Activated CD8-positive, alpha-beta T cell treated with anti-CD3 and anti-CD28 coated beads, Interleukin-2, amount 10 ng/mL, durations not matched to agents 7 days and 5 days (primary cell): ENCODE measurements at regions of chr1 and their contacts with region 1.

Region 1: GRCh38 chr1:179121159-179121938 is 39.5 kb downstream of the TOR3A start:
- DNase-seq: peak; percentile 59
- ATAC-seq: peak; percentile 47
- H3K4me3 Mint-ChIP-seq: no peak overlapping the region
- H3K27ac Mint-ChIP-seq: no peak overlapping the region
- H3K4me1 Mint-ChIP-seq: peaks cover 2% of the 10 kb centered on the region
- H3K27me3 Mint-ChIP-seq: no peaks in the 10 kb centered on the region

Region 2: GRCh38 chr1:179025125-179025974 is 96.0 kb before region 1 on chr1 and contains the start of gene FAM20B:
- CTCF ChIA-PET with region 1: no interaction called
- POLR2A ChIA-PET with region 1: no interaction called
- DNase-seq: peak; percentile 93
- ATAC-seq: peak; percentile 90
- H3K4me3 Mint-ChIP-seq: peak within 1 kb of the TSS; percentile 82
- H3K27ac Mint-ChIP-seq: peak within 1 kb of the TSS; percentile 82
- H3K4me1 Mint-ChIP-seq: peaks cover 31% of the 10 kb centered on the region
- H3K27me3 Mint-ChIP-seq: peaks cover 12% of the 10 kb centered on the region
- total RNA-seq, gene FAM20B: 28.6 to 29.4 TPM

Region 3: GRCh38 chr1:179081687-179082332 is 39.5 kb before region 1 on chr1 and contains the start of gene TOR3A:
- CTCF ChIA-PET with region 1: interaction called, 12 read pairs
- POLR2A ChIA-PET with region 1: interaction called, 3 read pairs
- DNase-seq: peak; percentile 88
- ATAC-seq: peak; percentile 83
- H3K4me3 Mint-ChIP-seq: peak within 1 kb of the TSS; percentile 93
- H3K27ac Mint-ChIP-seq: peak within 1 kb of the TSS; percentile 93
- H3K4me1 Mint-ChIP-seq: peaks cover 30% of the 10 kb centered on the region
- H3K27me3 Mint-ChIP-seq: no peaks in the 10 kb centered on the region
- total RNA-seq, gene TOR3A: 49.3 to 50.4 TPM

Region 4: GRCh38 chr1:179107706-179108629 is 13.4 kb before region 1 on chr1:
- CTCF ChIA-PET with region 1: interaction called, 10 read pairs
- POLR2A ChIA-PET with region 1: interaction called, 3 read pairs
- DNase-seq: no peak
- ATAC-seq: no peak
- H3K4me3 Mint-ChIP-seq: no peak overlapping the region
- H3K27ac Mint-ChIP-seq: no peak overlapping the region
- H3K4me1 Mint-ChIP-seq: no peaks in the 10 kb centered on the region
- H3K27me3 Mint-ChIP-seq: no peaks in the 10 kb centered on the region

Region 5: GRCh38 chr1:179153217-179153616 is 31.9 kb after region 1 on chr1:
- CTCF ChIA-PET with region 1: interaction called, 10 read pairs
- POLR2A ChIA-PET with region 1: no interaction called
- DNase-seq: no peak
- ATAC-seq: no peak
- H3K4me3 Mint-ChIP-seq: no peak overlapping the region
- H3K27ac Mint-ChIP-seq: no peak overlapping the region
- H3K4me1 Mint-ChIP-seq: peaks cover 9% of the 10 kb centered on the region
- H3K27me3 Mint-ChIP-seq: no peaks in the 10 kb centered on the region

Region 6: GRCh38 chr1:179293340-179294327 is 172.3 kb after region 1 on chr1 and contains the start of gene SOAT1:
- CTCF ChIA-PET with region 1: interaction called, 15 read pairs
- POLR2A ChIA-PET with region 1: no interaction called
- DNase-seq: peak; percentile 95
- ATAC-seq: peak; percentile 96
- H3K4me3 Mint-ChIP-seq: peak within 1 kb of the TSS; percentile 96
- H3K27ac Mint-ChIP-seq: peak within 1 kb of the TSS; percentile 92
- H3K4me1 Mint-ChIP-seq: peaks cover 46% of the 10 kb centered on the region
- H3K27me3 Mint-ChIP-seq: no peaks in the 10 kb centered on the region
- total RNA-seq, gene SOAT1: 76.1 to 78.3 TPM

Region 7: GRCh38 chr1:179365320-179366092 is 244.2 kb after region 1 on chr1 and contains the start of gene AXDND1:
- CTCF ChIA-PET with region 1: interaction called, 26 read pairs
- POLR2A ChIA-PET with region 1: no interaction called
- DNase-seq: peak; percentile 93
- ATAC-seq: peak; percentile 95
- H3K4me3 Mint-ChIP-seq: peak within 1 kb of the TSS; percentile 93
- H3K27ac Mint-ChIP-seq: peak within 1 kb of the TSS; percentile 100
- H3K4me1 Mint-ChIP-seq: peaks cover 7% of the 10 kb centered on the region
- H3K27me3 Mint-ChIP-seq: no peaks in the 10 kb centered on the region
- total RNA-seq, gene AXDND1: 1.4 TPM